ENCODE measurements at regions of chr9 and their contacts with region 1.

Region 1: DNA sequence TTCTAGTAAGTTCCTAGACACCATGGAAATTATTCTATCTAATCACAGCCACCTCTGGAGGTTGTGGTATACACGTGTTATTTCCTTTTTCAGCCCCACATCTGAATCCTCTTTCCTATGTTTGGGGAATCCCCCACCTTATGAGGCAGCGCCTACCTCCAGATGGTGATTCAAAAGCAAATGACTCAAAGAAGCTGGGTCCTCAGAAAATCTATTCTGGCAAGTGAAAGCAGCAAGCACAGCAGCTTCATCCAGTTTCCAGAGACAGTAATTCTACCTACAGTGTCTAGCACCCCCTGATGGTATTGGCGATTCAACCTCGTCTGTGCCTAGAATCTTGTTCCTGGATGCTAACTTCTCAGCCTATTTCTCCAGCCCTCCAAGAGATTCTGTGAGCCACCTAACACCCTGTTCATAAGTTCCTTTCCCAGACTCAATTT is 43.0 kb downstream of the STRBP start:
- DNase-seq: peak; percentile 82
- H3K4me3 Mint-ChIP-seq: no peak overlapping the region
- H3K27ac Mint-ChIP-seq: peak overlapping the region; percentile 74
- H3K4me1 Mint-ChIP-seq: peaks cover 31% of the 10 kb centered on the region
- H3K27me3 Mint-ChIP-seq: no peaks in the 10 kb centered on the region

Region 2: GRCh38 chr9:122464633-122465567 is 760.5 kb before region 1 on chr9:
- CTCF ChIA-PET with region 1: no interaction called
- intact Hi-C with region 1: loop called (anchors 1 kb)
- DNase-seq: peak; percentile 83
- H3K4me3 Mint-ChIP-seq: peak overlapping the region; percentile 72
- H3K27ac Mint-ChIP-seq: peak overlapping the region; percentile 68
- H3K4me1 Mint-ChIP-seq: peaks cover 11% of the 10 kb centered on the region
- H3K27me3 Mint-ChIP-seq: peaks cover 17% of the 10 kb centered on the region

Region 3: DNA sequence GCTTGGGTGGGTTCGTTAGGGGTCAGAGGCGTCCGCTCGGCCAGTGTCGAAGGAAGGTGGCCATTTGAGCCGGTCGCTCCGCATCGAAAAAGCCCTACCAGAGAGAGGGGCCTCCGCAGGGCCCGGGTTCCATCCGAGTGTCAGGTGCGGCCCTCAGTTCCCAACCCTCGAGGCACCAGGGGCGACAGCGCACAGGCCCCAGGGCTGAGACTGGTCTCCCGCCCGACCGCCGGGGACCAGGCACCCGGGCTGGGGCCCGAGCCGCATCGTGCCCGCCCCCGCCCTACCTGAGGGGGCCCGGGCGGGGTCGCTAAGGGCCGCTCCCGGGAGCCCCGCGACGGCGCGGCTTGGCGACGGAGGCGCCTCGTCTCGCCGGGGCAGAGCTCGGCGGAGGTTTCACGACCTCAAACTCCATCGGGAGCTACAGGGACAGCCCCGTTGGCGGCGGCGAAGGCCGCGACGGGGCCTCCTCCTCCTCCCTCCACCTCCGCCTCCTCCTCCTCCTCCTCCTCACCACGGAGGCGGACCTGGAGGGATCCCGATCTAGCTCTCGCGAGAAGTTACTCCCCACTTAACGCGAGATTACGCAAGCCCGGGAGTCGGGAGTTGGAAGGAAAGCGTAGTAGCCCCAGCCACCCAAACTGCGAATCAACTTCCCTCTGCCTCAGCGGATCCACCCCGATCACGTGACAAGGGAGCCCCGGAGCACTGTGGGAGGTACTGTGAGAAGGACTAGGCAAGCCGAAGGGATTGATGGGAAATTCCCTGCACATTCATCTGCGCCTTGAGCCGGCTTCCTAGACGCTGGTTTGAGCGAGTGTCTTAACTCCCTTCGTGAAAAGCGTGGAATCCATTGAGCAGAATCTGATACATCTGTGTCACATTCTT is 320.3 kb before region 1 on chr9 and contains the start of gene RC3H2:
- CTCF ChIA-PET with region 1: no interaction called
- intact Hi-C with region 1: loop called (anchors 2 kb)
- DNase-seq: peak; percentile 99
- H3K4me3 Mint-ChIP-seq: peak within 1 kb of the TSS; percentile 89
- H3K27ac Mint-ChIP-seq: peak within 1 kb of the TSS; percentile 94
- H3K4me1 Mint-ChIP-seq: peaks cover 18% of the 10 kb centered on the region
- H3K27me3 Mint-ChIP-seq: no peaks in the 10 kb centered on the region
- total RNA-seq, gene RC3H2: 20.2 to 21.3 TPM

Region 4: DNA sequence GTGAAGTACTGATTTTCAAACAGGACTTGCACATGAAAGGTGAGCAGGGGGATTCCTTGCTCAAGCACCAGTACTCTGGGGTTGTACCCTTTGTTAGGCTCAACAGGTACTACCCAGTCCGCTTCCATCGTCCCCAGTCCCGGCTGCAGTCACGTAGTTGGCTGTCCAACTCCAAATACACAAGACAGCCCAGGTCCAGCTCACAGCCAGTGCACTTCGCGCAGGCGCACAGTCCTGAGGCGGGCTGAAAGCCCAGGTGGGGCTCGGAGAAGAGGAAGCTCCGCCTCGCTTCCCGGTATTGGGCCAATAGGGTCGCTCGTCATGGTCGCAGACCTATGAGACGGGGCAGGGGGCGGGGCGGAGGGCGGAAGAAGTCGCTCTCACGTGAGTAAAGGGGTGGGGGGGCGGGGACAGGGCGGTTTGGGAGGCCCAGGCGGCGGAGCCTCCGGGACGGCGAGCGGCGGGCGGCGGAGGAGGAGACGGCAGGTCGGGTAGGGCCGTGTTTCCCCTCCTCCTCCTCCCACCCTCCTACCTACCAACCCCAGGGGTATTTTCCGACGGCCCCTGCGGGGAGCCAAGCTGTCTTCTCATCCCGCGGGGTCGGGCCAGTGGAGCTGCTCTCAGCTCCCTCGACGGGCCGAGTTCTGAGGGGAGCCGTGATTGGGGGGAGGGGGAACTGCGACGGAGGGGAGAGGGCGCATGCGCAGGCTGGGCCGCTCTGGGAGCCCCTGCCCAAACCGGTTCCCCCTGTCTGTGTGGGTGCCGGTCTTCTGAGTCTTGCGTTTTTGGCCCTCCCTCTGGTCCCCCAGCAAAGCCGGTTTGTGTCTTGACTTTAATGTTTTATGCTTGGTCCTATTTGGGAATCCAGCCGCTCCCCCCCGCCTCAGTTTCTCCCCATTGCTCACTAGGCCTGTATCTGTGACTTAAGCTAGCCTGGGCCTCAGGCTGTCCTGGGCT is 284.5 kb before region 1 on chr9 and contains the start of gene RABGAP1:
- CTCF ChIA-PET with region 1: no interaction called
- intact Hi-C with region 1: no loop called
- DNase-seq: peak; percentile 99
- H3K4me3 Mint-ChIP-seq: peak within 1 kb of the TSS; percentile 96
- H3K27ac Mint-ChIP-seq: peak within 1 kb of the TSS; percentile 83
- H3K4me1 Mint-ChIP-seq: peaks cover 37% of the 10 kb centered on the region
- H3K27me3 Mint-ChIP-seq: no peaks in the 10 kb centered on the region
- total RNA-seq, gene RABGAP1: 19.7 to 21.3 TPM

Region 5: DNA sequence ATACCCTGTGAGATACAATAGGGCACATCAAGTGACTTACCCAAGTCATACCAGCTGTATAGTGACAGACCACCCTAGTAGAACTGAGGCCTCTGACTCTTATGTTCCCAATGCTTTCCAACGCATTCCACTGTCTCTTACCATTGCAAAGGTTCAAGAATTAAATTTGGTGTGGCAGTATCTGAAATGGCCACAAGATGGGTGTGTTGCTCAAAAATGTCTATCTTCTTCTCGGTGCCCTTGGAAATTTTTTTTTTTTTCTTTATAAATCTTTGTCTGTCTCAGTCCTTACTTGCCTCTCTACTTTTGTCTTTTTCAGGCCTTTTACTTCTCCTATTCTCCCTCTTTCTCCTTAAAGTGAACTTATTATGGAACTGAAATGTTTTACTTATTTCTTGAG is 143.6 kb before region 1 on chr9:
- CTCF ChIA-PET with region 1: no interaction called
- intact Hi-C with region 1: loop called (anchors 1 kb)
- DNase-seq: peak; percentile 34
- H3K4me3 Mint-ChIP-seq: no peak overlapping the region
- H3K27ac Mint-ChIP-seq: no peak overlapping the region
- H3K4me1 Mint-ChIP-seq: no peaks in the 10 kb centered on the region
- H3K27me3 Mint-ChIP-seq: no peaks in the 10 kb centered on the region

Region 6: GRCh38 chr9:123248630-123249029 is 23.2 kb after region 1 on chr9:
- CTCF ChIA-PET with region 1: interaction called, 4 read pairs
- intact Hi-C with region 1: loop called (anchors 2 kb)
- DNase-seq: no peak
- H3K4me3 Mint-ChIP-seq: no peak overlapping the region
- H3K27ac Mint-ChIP-seq: no peak overlapping the region
- H3K4me1 Mint-ChIP-seq: peaks cover 53% of the 10 kb centered on the region
- H3K27me3 Mint-ChIP-seq: no peaks in the 10 kb centered on the region

Region 7: DNA sequence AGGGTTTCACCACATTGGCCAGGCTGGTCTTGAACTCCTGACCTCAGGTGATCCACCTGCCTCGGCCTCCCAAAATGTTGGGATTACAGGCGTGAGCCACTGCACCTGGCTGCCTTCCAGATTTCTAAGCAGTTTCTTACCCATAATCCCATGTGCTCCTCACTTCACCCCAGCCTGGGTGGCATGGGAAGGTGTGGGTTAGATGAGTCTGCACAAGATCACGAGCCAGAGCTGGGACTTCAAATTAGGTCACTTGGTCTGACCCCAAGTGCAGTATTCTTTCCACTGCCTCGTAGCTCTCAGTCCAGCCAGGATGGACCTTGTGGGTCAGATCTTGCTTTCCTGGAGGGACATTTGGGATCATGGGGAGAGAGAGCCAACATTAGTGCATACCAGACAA is 80.5 kb after region 1 on chr9:
- CTCF ChIA-PET with region 1: no interaction called
- intact Hi-C with region 1: loop called (anchors 1 kb)
- DNase-seq: no peak
- H3K4me3 Mint-ChIP-seq: no peak overlapping the region
- H3K27ac Mint-ChIP-seq: no peak overlapping the region
- H3K4me1 Mint-ChIP-seq: peaks cover 40% of the 10 kb centered on the region
- H3K27me3 Mint-ChIP-seq: no peaks in the 10 kb centered on the region

Region 8: DNA sequence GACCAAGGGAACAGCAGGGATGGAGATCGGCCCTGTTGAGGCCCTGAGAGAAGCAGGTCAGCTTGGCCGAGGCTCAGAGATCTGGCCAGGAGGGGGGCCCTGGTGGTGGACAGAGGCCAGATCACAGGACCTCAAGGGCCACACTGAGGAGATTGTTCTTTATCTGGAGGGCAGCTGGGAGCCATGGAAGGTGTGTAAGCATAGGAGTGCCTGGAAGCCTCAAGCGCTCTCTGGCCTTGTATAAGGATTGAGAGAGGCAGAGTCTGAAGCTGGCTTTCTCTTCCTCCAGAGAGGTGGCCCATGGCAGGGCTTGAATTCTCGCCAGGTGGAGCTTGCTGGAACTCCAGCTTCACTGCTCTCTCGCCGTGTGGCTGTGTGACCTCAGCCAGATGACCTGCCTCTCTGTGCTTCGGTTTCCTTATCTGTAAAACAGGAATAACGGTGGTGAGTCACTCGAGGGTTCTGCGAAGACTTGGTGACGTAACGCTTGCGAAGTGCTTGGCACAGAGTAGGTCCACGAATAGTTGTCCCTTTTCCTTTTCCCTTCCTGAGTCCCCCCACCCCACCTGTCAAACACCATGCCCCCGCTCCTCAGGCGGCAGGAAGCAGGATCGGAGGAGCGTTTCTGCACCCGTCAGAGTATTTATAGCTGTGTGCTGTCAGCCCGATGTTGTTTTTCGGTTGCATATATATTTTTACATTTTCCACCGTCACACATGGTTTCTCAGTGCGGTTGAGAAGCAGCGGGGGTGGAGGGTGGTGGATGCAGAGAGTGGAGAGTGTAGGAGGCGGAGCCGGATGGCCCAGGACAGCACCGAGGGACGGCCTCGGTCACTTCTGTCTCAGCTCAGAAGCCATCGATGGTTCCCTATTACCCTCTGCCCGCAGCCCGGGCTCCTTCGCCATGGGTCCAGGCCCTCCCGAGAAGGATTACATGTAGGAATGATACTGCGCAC is 113.6 kb after region 1 on chr9:
- CTCF ChIA-PET with region 1: interaction called, 6 read pairs
- intact Hi-C with region 1: loop called (anchors 1 kb)
- DNase-seq: peak; percentile 82
- H3K4me3 Mint-ChIP-seq: peak overlapping the region; percentile 77
- H3K27ac Mint-ChIP-seq: peak overlapping the region; percentile 97
- H3K4me1 Mint-ChIP-seq: peaks cover 35% of the 10 kb centered on the region
- H3K27me3 Mint-ChIP-seq: no peaks in the 10 kb centered on the region

Measured in activated naive CD4-positive, alpha-beta T cell treated with anti-CD3 and anti-CD28 coated beads for 36 hours (primary cell).